ENCODE measurements at regions of chr10 and their contacts with region 1.

Region 1: DNA sequence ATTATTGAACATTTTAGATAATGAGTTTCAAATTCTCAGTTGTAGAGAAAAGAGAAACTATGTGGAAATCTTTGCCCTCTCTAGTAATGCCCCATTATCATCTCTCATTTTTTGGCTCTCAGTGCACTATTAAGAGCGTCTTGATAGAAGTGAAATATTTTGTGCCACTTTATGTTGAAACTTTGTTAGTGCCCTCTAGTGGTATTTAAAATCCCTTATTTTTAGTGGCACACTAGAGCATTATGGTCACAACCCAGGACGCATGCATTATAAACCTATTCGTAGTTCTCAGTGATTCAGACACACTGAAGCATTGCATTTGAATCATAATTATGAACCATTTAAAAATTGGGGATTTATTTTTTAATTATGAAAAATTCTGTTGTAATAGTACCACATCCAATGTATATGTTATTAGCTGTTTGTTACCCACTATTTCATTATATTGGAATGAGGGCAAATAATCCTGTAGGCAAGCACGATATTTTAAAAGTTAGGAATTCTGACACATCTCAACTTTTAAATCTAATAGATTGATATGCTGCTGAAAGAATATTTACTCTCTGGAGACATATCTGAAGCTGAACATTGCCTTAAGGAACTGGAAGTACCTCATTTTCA is 21.9 kb downstream of the PDCD4 start:
- ATAC-seq: peak; percentile 40 to 89 (median 62)
- H3K4me3 ChIP-seq: no peak overlapping the region
- H3K27ac ChIP-seq: no peak overlapping the region
- H3K4me1 ChIP-seq: peaks cover 0 to 2% of the 10 kb centered on the region in 2 donors

Region 2: GRCh38 chr10:110304780-110305421 is 588.8 kb before region 1 on chr10 and contains the start of gene SMNDC1:
- in situ Hi-C with region 1: loop called in 1 of 9 experiments (anchors 25 kb)
- ATAC-seq: peak; percentile 82 to 96 (median 94)
- H3K4me3 ChIP-seq: peak within 1 kb of the TSS; percentile 59 to 91 (median 67)
- H3K27ac ChIP-seq: peak within 1 kb of the TSS; percentile 88 to 93
- H3K4me1 ChIP-seq: peaks cover 6 to 24% of the 10 kb centered on the region in 2 donors
- total RNA-seq, gene SMNDC1: 8.3 to 24.0 (median 12.5) TPM

Region 3: GRCh38 chr10:110600487-110601101 is 293.1 kb before region 1 on chr10:
- in situ Hi-C with region 1: loop called in 6 of 9 experiments (anchors 10 to 25 kb)
- ATAC-seq: peak in 6 of 8 experiments; percentile 24 to 67 (median 54)
- H3K4me3 ChIP-seq: no peak overlapping the region
- H3K27ac ChIP-seq: no peak overlapping the region
- H3K4me1 ChIP-seq: no peaks in the 10 kb centered on the region

Region 4: GRCh38 chr10:110610308-110610774 is 283.3 kb before region 1 on chr10:
- in situ Hi-C with region 1: loop called in 6 of 9 experiments (anchors 10 to 25 kb)
- ATAC-seq: peak; percentile 61 to 76 (median 68)
- H3K4me3 ChIP-seq: peak overlapping the region in 1 of 5 donors; percentile 0
- H3K27ac ChIP-seq: peak overlapping the region in 1 of 2 donors; percentile 15
- H3K4me1 ChIP-seq: peaks cover 6 to 10% of the 10 kb centered on the region in 2 donors

Region 5: GRCh38 chr10:110664483-110665420 is 228.9 kb before region 1 on chr10:
- in situ Hi-C with region 1: no loop called
- ATAC-seq: peak; percentile 72 to 100 (median 94)
- H3K4me3 ChIP-seq: no peak overlapping the region
- H3K27ac ChIP-seq: peak overlapping the region in 1 of 2 donors; percentile 66
- H3K4me1 ChIP-seq: peaks cover 19 to 27% of the 10 kb centered on the region in 2 donors

Region 6: GRCh38 chr10:110774069-110775019 is 119.3 kb before region 1 on chr10:
- in situ Hi-C with region 1: loop called in 1 of 9 experiments (anchors 25 kb)
- ATAC-seq: peak; percentile 73 to 95 (median 88)
- H3K4me3 ChIP-seq: no peak overlapping the region
- H3K27ac ChIP-seq: no peak overlapping the region
- H3K4me1 ChIP-seq: peaks cover 7 to 10% of the 10 kb centered on the region in 2 donors

Measured in motor neuron (in vitro differentiated cells).